Activated CD8-positive, alpha-beta memory T cell treated with anti-CD3 and anti-CD28 coated beads, Interleukin-2, amount 10 ng/mL, durations not matched to agents 7 days and 5 days (primary cell): ENCODE measurements at regions of chr1 and their contacts with region 1.

Region 1: GRCh38 chr1:206583707-206584648 is 28.3 kb downstream of the EIF2D start:
- DNase-seq: peak; percentile 88
- ATAC-seq: peak; percentile 24
- H3K4me3 Mint-ChIP-seq: peak overlapping the region; percentile 10
- H3K27ac Mint-ChIP-seq: peak overlapping the region; percentile 95
- H3K4me1 Mint-ChIP-seq: peaks cover 93% of the 10 kb centered on the region
- H3K27me3 Mint-ChIP-seq: no peaks in the 10 kb centered on the region

Region 2: DNA sequence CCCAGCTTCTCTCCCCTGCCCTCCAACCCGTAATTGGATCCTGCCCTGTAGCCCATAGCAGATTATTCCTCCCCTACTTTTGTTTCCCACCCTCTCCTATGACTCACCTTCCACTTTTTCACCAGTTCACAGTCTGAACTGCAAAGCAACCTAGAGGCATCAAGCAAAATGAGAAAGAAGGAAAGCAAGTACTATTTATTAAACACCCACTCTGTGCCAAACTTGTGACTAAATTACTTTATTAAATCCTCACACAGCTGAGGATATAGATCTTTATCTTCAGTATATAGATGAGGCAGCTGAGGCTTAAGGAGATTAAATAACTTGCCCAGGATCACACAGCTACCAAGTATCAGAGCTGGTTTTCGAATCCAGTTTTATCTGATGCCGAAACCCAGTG is 134.4 kb before region 1 on chr1:
- CTCF ChIA-PET with region 1: no interaction called
- DNase-seq: no peak
- ATAC-seq: no peak
- H3K4me3 Mint-ChIP-seq: no peak overlapping the region
- H3K27ac Mint-ChIP-seq: no peak overlapping the region
- H3K4me1 Mint-ChIP-seq: no peaks in the 10 kb centered on the region
- H3K27me3 Mint-ChIP-seq: no peaks in the 10 kb centered on the region

Region 3: DNA sequence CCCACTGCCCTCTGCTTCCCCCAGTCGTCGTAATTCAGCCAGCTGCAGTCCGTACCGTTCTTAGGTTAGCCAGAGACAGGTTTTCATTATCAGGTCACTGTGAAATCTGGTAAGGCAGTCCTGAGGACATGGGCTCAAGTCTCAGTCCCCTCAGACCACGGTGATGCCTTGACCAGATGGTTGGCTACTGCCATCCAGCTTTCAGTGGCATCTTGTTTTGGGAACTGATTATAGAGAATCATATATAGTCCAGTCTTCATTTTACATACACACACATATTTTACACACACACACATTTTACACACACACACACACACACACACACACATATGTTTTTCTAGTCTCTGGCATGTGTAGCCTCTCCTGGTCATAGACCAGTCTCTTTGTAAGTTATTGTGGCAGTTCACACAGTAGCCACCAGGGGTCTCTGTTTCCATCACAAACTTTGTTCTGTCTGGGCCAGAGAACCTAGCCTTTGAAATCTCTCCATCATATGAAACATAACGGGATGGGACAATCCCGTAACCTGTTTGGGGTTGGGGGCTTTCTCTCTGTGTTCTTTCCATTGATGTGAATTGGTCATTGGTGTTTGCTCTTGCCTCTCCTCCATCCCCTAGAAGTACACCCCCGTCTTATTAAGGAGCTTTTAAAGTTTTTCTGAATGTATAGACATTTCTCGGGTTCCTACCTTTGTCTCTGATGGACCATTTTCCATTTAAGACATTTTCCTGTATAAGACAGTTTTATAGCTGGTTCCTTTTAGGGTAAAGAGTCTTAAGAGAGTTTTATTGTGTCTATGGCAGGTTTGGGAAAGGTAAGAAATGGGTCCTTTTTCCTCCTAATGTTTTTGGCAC is 122.1 kb before region 1 on chr1:
- CTCF ChIA-PET with region 1: interaction called, 14 read pairs
- DNase-seq: peak; percentile 86
- ATAC-seq: peak; percentile 77
- H3K4me3 Mint-ChIP-seq: no peak overlapping the region
- H3K27ac Mint-ChIP-seq: no peak overlapping the region
- H3K4me1 Mint-ChIP-seq: peaks cover 45% of the 10 kb centered on the region
- H3K27me3 Mint-ChIP-seq: no peaks in the 10 kb centered on the region

Region 4: GRCh38 chr1:206469933-206470691 is 113.9 kb before region 1 on chr1 and contains the start of gene IKBKE:
- CTCF ChIA-PET with region 1: interaction called, 13 read pairs
- DNase-seq: peak; percentile 84
- ATAC-seq: peak; percentile 72
- H3K4me3 Mint-ChIP-seq: peak within 1 kb of the TSS; percentile 91
- H3K27ac Mint-ChIP-seq: peak within 1 kb of the TSS; percentile 92
- H3K4me1 Mint-ChIP-seq: peaks cover 88% of the 10 kb centered on the region
- H3K27me3 Mint-ChIP-seq: no peaks in the 10 kb centered on the region
- total RNA-seq, gene IKBKE: 64.8 to 72.7 TPM

Region 5: DNA sequence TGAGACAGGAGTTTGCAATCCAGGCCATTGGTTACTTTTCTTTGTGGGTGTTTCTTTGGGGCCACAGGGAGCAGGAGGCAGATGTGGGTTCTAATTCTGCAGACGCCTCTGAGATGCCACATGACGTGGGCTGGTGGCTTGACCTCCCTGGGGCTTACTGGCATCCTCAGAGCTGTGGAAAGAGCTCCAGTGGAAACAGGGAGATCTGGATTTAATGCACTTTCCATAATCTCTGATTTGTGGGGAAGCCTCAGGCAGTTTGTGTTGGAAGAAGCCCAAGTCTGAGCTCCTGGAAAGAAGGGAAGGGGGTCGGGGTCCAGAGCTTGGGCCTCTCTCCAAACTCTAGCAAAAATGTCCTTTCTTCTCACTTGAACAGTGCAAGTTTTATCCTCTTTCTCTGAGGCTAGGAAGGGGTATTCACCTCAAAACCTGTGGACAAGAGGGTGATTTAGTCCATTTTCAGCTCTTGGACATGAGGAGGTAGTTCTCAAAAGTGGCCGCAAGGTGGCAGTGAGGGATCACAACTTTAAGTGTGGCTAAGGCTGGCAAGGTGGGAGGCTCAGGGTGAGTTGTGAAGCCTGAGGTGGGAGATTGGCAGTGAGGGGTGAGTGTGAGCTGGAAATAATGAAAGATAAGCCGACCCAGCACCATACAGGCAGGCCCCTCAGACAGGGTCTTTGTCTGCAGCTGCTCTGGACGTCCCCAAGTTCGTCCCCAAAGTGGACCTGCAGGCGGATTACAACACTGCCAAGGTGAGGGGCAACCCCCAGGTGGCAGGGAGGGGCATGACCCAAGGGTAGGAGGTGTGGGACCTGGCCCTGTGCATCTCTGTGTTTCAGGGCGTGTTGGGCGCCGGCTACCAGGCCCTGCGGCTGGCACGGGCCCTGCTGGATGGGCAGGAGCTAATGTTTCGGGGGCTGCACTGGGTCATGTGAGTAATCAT is 104.5 kb before region 1 on chr1:
- CTCF ChIA-PET with region 1: interaction called, 20 read pairs
- DNase-seq: peak; percentile 80
- ATAC-seq: peak; percentile 72
- H3K4me3 Mint-ChIP-seq: no peak overlapping the region
- H3K27ac Mint-ChIP-seq: peak overlapping the region; percentile 61
- H3K4me1 Mint-ChIP-seq: peaks cover 17% of the 10 kb centered on the region
- H3K27me3 Mint-ChIP-seq: no peaks in the 10 kb centered on the region

Region 6: DNA sequence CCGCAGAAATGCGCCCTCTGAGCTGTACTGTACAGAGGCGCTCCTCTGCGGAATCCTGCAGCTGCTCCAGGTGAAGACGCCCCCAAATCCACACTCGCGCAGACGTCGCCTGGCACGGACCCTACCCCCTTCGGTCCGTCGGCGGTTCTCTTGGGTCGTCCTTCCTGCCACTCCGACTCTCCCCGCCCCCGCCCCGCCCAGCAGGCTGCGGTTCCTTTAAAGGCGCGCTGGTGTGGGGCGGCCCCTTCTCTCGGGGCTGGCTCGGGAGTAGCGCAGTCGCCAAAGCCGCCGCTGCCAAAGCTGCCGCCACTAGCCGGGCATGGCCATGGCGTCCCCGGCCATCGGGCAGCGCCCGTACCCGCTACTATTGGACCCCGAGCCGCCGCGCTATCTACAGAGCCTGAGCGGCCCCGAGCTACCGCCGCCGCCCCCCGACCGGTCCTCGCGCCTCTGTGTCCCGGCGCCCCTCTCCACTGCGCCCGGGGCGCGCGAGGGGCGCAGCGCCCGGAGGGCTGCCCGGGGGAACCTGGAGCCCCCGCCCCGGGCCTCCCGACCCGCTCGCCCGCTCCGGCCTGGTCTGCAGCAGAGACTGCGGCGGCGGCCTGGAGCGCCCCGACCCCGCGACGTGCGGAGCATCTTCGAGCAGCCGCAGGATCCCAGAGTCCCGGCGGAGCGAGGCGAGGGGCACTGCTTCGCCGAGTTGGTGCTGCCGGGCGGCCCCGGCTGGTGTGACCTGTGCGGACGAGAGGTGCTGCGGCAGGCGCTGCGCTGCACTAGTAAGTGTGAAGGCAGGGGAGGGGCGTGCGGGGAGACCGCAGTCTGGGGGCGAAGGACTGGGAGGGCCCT is 76.5 kb before region 1 on chr1 and contains the start of gene RASSF5:
- CTCF ChIA-PET with region 1: interaction called, 13 read pairs
- DNase-seq: peak; percentile 90
- ATAC-seq: peak; percentile 87
- H3K4me3 Mint-ChIP-seq: peak within 1 kb of the TSS; percentile 67
- H3K27ac Mint-ChIP-seq: no peak within 1 kb of the TSS
- H3K4me1 Mint-ChIP-seq: peaks cover 48% of the 10 kb centered on the region
- H3K27me3 Mint-ChIP-seq: peaks cover 26% of the 10 kb centered on the region
- total RNA-seq, gene RASSF5: 184 to 216 TPM

Region 7: DNA sequence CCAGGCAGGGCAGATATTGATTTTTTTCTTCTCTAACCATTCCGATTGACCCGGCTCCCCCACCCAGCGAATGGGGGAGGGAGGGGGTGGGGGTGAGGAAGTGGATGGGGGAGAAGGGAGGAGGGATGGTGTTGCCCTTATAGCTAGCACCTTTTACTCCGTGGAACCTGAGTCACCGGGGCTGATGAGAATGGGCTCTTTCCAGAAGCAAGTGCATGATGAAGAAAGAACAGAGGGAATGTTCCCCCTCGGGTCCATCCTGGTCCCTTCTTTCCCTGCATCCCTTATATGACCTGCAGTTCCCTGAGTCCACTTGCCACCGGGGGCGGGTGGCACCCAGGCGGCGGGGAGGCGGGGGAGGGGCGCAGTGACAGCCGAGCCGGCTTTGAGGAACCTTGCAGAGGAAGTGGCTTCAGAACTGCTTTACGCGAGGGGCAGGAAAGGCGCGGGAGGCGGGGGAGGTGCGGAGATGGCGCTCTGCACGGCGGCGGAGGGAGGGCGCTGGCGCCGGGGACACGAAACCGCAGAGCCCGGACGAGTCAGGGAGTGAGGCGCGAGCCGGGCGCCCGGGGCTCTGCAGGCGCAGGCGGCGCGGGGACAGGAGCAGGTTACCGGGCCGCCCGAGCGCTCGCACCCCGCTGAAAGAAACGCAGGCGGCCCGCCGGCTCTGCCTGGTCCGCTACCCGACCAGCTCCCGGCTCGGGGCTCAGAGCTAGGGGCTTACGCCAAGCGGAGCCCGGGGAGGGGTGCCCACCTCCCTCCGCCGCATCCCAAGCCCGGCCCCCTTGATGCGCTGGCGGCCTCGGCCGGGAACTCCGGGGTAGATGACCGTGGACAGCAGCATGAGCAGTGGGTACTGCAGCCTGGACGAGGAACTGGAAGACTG is 27.0 kb before region 1 on chr1:
- CTCF ChIA-PET with region 1: interaction called, 490 read pairs
- DNase-seq: peak; percentile 95
- ATAC-seq: peak; percentile 72
- H3K4me3 Mint-ChIP-seq: peak overlapping the region; percentile 98
- H3K27ac Mint-ChIP-seq: peak overlapping the region; percentile 96
- H3K4me1 Mint-ChIP-seq: peaks cover 69% of the 10 kb centered on the region
- H3K27me3 Mint-ChIP-seq: no peaks in the 10 kb centered on the region

Region 8: GRCh38 chr1:206600527-206600926 is 16.5 kb after region 1 on chr1:
- CTCF ChIA-PET with region 1: no interaction called
- DNase-seq: no peak
- ATAC-seq: no peak
- H3K4me3 Mint-ChIP-seq: no peak overlapping the region
- H3K27ac Mint-ChIP-seq: no peak overlapping the region
- H3K4me1 Mint-ChIP-seq: peaks cover 1% of the 10 kb centered on the region
- H3K27me3 Mint-ChIP-seq: no peaks in the 10 kb centered on the region

Region 9: DNA sequence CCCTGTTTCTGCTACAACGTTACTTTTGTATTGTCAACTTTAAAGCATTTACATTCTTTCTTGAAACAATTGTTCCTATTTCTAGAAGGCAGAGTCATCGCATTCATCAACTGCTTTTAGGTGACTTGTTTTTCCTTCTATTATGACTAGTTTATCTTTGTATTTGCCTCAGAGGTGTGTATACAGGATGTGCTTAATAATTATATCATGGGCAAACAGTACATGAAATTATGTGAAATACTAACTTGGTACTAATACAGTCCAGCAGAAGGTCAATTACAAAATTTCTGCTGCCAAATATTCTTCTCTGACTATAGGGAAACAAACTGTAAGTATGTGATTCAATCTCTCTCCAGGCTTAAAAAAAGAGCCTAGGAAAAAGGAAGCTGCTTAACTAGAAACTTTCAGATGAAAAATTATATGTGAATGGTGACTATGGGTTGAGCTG is 621.7 kb after region 1 on chr1:
- CTCF ChIA-PET with region 1: no interaction called
- DNase-seq: no peak
- ATAC-seq: no peak
- H3K4me3 Mint-ChIP-seq: no peak overlapping the region
- H3K27ac Mint-ChIP-seq: no peak overlapping the region
- H3K4me1 Mint-ChIP-seq: peaks cover 2% of the 10 kb centered on the region
- H3K27me3 Mint-ChIP-seq: peaks cover 4% of the 10 kb centered on the region